Endothelial cell of umbilical vein (primary cell): ENCODE measurements at regions of chr6 and their contacts with region 1.

Region 1: DNA sequence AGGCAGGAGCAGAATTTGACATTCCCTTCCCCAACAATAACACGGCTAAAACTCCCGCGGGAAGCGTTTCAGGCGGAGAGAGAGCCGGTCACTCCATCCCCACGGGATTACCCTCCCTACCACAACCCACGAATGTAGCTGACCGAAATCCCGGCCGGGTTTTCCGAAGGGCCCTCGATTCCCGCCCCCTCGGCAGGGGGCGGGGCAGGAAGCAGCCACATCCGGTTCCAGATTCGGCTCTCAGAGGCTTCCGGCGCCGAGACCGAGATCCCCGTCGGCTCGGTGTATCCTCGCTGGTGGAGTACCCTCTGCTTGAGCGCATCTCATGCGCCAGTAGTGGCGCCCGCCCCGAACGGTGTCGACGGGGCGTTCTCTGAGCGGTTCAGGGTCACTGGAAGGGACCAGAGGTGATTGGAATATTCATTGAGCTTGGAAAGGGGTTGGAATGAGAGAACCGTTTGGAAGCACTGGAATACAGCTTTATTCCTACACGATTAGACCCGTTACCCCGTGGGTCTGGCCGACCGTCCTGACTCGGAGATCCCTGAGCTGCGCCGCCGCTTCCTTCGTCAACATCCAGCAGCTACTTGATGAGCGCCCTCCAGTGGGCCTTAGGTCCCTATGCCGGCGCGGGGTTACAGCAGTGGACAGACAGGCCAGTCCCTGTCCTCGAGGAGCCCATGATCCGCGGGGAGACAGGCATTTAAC is 649 bp upstream of the RGL2 start:
- DNase-seq: peak; percentile 88
- H3K4me3 ChIP-seq: peak overlapping the region; percentile 55 to 82 (median 67)
- H3K27ac ChIP-seq: peak overlapping the region; percentile 80
- H3K4me1 ChIP-seq: peaks cover 13% of the 10 kb centered on the region
- H3K27me3 ChIP-seq: no peaks in the 10 kb centered on the region
- CTCF ChIP-seq: peak; percentile 70 to 84
- POLR2A ChIP-seq: peak; percentile 98

Region 2: DNA sequence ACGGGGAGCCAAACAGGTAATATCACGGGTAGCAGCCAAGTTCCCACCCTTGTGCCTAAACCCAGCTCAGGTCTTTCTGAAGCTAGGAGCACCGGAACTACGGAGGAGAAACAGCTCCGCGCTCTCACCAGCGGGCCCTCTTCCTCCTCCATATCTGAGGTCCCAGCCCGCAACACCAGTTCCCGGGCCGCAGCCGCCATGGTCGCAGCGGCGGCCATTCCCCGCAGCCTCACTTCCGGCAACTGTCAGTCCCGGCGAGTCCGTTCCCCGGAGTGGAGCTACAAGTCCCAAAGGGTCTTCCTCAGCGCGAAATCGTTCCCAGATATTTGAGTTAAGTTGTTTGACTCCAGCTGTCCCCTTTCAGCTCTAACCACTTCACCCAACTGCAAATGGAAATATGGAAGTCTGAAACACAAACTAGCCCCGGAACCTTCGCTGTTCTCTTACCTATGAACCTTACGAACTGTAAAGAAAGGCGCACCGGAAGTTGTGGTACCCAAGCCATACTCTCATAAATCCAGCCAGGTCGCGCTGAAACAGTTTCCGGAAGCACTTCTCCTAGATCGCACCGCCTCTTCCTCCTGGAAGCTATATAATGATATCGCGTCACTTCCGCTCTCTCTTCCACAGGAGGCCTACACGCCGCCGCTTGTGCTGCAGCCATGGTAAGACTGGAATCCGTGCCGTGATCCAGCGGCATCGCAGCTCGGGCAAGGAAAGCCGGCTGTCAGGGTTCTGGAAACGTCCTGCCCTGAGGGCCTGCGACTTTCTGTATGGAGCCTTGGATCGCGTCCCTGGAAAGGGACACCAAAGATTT is 27.7 kb before region 1 on chr6 and contains the starts of genes RPS18 and VPS52:
- CTCF ChIA-PET with region 1: interaction called, 39 read pairs
- POLR2A ChIA-PET with region 1: no interaction called
- dilution Hi-C with region 1: no loop called
- intact Hi-C with region 1: loop called (anchors 1 kb)
- DNase-seq: peak; percentile 99
- H3K4me3 ChIP-seq: peak within 1 kb of the TSS; percentile 83 to 96 (median 86)
- H3K27ac ChIP-seq: peak within 1 kb of the TSS; percentile 85
- H3K4me1 ChIP-seq: peaks cover 47% of the 10 kb centered on the region
- H3K27me3 ChIP-seq: no peaks in the 10 kb centered on the region
- CTCF ChIP-seq: no peak
- POLR2A ChIP-seq: peak; percentile 99
- total RNA-seq, gene RPS18: 2,193 and 2,336 TPM in 2 replicates
- total RNA-seq, gene VPS52: 43.8 and 49.2 TPM in 2 replicates

Region 3: GRCh38 chr6:33288921-33289748 is 10.3 kb before region 1 on chr6 and contains the starts of genes PFDN6 and WDR46:
- CTCF ChIA-PET with region 1: interaction called, 11 read pairs
- POLR2A ChIA-PET with region 1: interaction called, 9 read pairs
- dilution Hi-C with region 1: no loop called
- intact Hi-C with region 1: loop called (anchors 1 kb)
- DNase-seq: peak; percentile 96
- H3K4me3 ChIP-seq: peak within 1 kb of the TSS; percentile 59 to 96 (median 88)
- H3K27ac ChIP-seq: peak within 1 kb of the TSS; percentile 16
- H3K4me1 ChIP-seq: peaks cover 13% of the 10 kb centered on the region
- H3K27me3 ChIP-seq: no peaks in the 10 kb centered on the region
- CTCF ChIP-seq: no peak
- POLR2A ChIP-seq: peak; percentile 81
- total RNA-seq, gene PFDN6: 52.3 and 63.5 TPM in 2 replicates
- total RNA-seq, gene WDR46: 66.9 and 71.2 TPM in 2 replicates

Region 4: DNA sequence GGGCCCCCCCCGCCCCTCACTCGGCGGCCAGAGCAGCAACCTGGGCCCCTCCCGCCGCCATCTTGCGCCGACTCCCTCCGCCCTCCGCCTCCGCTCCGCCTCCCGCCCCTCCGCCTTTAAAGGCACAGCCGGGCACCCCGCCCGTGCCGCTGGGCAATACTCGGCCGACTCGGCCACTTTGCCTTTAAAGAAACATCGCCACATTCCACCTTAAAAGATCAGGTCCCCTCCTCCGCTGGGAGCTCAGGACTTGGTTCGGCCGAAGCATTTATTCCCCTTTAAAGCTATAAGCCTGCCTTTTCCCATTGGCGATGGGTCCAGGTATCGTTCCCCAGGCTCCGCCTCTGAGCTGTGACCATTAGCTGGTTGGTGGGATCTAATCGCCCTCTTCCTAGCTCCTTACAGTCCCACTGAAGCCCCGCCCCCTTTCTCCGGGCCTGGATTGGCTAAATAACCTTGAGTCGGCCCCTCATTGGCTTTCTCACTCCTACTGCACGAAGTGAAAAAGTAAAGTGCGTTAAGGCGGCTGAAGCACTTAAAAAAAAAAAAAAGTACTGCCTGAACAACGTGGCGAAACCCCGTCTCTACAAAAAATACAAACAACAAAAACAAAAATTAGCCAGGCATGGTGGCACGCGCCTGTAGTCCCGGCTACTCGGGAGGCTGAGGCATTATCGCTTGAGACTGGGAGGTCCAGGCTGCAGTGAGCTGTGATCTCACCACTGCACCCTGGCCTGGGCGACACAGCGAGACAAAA is 18.5 kb after region 1 on chr6 and contains the start of gene ZBTB22:
- CTCF ChIA-PET with region 1: interaction called, 19 read pairs
- POLR2A ChIA-PET with region 1: interaction called, 6 read pairs
- dilution Hi-C with region 1: no loop called
- intact Hi-C with region 1: loop called (anchors 1 kb)
- DNase-seq: peak; percentile 99
- H3K4me3 ChIP-seq: peak within 1 kb of the TSS; percentile 60 to 87 (median 87)
- H3K27ac ChIP-seq: peak within 1 kb of the TSS; percentile 71
- H3K4me1 ChIP-seq: peaks cover 55% of the 10 kb centered on the region
- H3K27me3 ChIP-seq: no peaks in the 10 kb centered on the region
- CTCF ChIP-seq: no peak
- POLR2A ChIP-seq: no peak
- total RNA-seq, gene ZBTB22: 12.6 and 13.9 TPM in 2 replicates

Region 5: DNA sequence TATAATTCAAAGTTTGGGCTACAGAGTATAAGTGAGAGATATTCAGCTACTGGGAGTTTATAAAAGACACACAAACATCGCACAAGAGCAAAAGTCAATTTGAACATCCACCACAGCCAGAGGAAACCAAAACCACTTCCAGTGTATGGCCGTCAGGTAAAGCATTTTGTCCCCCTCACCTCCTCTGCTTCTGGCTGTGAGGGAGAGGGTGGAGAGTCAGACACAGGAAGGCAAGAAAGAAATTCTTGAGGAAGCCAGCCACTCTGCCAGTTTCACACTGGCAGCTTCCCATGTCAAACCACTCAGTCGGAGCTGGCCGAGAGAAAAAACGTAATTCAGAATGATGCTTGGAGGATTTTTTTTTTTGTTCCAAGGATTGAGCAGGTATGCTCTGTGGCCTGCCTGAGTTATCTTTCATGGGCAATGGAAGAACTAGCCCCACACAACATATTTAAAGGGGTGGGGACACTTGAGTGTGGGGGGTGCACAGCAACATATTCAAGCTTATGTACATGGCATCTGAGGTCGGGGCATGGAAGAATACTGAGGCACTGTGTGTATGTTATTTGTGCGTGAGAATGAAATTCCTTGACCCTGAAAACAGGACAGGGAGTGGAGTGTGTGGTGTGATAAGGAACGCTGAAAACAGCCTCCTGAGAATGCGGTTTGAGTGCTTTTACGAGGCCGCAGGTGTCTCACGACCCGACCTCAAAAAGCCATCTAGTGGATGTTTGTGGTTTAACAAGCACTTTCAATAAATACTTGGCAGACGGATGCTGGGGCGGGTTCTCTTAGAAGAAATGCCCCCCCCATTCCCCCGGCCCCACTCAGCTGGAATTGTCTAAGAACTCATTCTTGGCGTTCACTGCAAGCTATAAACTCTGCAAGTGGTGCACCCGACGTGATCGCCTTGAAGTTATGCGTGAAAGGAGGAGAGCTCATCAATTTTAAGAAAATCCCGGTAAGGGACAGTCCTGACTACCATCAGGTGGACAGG is 45.6 kb after region 1 on chr6:
- CTCF ChIA-PET with region 1: interaction called, 14 read pairs
- POLR2A ChIA-PET with region 1: no interaction called
- dilution Hi-C with region 1: no loop called
- intact Hi-C with region 1: no loop called
- DNase-seq: peak; percentile 84
- H3K4me3 ChIP-seq: no peak overlapping the region
- H3K27ac ChIP-seq: no peak overlapping the region
- H3K4me1 ChIP-seq: no peaks in the 10 kb centered on the region
- H3K27me3 ChIP-seq: no peaks in the 10 kb centered on the region
- CTCF ChIP-seq: peak; percentile 41 to 54
- POLR2A ChIP-seq: no peak

Region 6: GRCh38 chr6:33521489-33522091 is 222.2 kb after region 1 on chr6:
- CTCF ChIA-PET with region 1: no interaction called
- POLR2A ChIA-PET with region 1: no interaction called
- dilution Hi-C with region 1: no loop called
- intact Hi-C with region 1: no loop called
- DNase-seq: no peak
- H3K4me3 ChIP-seq: no peak overlapping the region
- H3K27ac ChIP-seq: no peak overlapping the region
- H3K4me1 ChIP-seq: no peaks in the 10 kb centered on the region
- H3K27me3 ChIP-seq: no peaks in the 10 kb centered on the region
- CTCF ChIP-seq: no peak
- POLR2A ChIP-seq: no peak